PC-3 (cell line): ENCODE measurements at regions of chr16 and their contacts with region 1.

Region 1: DNA sequence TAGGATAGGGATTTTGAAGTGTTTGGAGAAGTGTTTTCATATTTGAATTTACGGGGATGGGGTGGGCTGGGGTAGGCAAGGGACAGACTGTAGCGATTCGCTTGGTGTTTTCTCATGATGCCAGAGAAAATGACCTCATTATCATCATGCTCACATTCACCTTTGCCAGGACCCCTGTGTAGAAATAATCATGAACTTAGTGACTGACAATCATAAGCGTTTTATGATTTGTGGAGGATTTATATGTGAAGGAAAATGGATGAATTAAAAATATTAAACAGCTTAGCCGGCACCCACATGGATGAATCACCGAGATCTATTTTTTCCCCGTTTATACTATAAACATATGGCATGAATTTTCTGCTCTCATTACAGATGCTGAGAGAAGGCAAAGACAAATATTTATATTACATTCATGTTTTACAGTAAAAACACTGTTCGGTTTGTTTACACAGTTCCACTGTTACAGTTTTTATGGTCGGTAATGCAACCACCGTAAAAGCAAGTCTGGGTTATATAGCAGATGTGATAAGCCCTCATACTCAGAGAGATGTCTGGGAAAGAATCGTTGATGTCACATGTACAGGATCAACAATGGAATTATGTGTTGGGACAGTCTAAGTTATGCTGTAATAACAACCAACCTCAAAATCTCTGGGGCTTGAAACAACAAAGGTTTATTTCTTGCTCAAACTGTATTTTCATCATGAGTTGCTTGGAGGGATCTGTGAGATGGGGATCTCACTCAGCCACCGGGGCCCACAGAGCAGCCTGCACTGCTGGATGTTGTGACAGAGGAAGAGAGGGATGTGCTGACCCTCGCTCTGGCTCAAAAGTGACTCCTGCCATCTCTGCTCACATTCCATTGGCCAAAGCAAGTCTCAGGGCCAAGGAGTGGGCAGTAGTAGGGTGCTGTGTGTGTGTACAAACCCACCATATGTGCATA is 85.1 kb downstream of the WWOX start:
- DNase-seq: peak; percentile 73
- ATAC-seq: peak; percentile 91
- H3K4me3 ChIP-seq: peak overlapping the region; percentile 58
- H3K27ac ChIP-seq: peak overlapping the region; percentile 34
- H3K4me1 ChIP-seq: peaks cover 19% of the 10 kb centered on the region
- H3K27me3 ChIP-seq: no peaks in the 10 kb centered on the region
- CTCF ChIP-seq: no peak

Region 2: DNA sequence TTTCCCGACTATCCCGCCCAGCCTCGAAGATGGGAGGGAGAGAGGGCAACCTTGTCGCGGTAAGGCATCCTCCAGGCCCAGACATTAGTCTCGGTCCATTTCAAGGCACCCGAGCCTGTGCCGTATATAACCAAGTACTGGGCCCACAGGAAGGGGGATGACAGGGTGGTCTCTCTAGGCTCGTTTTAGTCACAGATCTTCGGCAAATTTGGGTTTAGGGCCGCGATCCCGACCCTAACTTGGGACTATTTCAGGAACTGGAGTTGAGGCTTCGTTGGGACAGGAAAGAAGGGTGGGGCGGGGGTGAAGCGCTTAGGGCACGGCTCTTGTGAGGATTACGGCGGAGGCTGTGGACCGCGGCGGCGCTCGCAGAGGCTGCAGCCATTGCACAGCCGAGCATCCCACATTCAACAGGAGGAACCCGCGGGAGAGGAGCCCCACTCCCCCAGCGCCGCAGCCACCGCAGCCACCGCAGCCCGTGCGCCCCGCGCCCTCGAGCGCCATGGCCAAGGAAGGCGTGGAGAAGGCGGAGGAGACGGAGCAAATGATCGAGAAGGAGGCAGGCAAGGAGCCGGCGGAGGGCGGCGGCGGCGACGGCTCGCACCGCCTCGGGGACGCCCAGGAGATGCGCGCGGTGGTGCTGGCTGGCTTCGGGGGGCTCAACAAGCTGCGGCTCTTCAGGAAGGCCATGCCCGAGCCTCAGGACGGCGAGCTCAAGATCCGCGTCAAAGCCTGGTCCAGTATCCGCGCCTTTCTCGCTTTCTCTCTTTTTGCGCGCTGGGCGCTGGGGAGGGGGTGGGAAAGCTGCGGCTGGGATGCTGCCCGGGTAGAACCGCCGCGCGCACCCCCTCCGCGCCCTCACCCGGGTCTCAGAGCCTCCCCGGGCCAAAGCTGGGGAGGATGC is 396.1 kb before region 1 on chr16 and contains the start of gene VAT1L:
- CTCF ChIA-PET with region 1: no interaction called
- POLR2A ChIA-PET with region 1: no interaction called
- intact Hi-C with region 1: no loop called
- DNase-seq: no peak
- ATAC-seq: no peak
- H3K4me3 ChIP-seq: no peak within 1 kb of the TSS
- H3K27ac ChIP-seq: no peak within 1 kb of the TSS
- H3K4me1 ChIP-seq: no peaks in the 10 kb centered on the region
- H3K27me3 ChIP-seq: peaks cover 18% of the 10 kb centered on the region; the same call in 1 of the 2 replicates
- CTCF ChIP-seq: no peak
- total RNA-seq, gene VAT1L: 0.29 and 0.47 TPM in 2 replicates

Region 3: DNA sequence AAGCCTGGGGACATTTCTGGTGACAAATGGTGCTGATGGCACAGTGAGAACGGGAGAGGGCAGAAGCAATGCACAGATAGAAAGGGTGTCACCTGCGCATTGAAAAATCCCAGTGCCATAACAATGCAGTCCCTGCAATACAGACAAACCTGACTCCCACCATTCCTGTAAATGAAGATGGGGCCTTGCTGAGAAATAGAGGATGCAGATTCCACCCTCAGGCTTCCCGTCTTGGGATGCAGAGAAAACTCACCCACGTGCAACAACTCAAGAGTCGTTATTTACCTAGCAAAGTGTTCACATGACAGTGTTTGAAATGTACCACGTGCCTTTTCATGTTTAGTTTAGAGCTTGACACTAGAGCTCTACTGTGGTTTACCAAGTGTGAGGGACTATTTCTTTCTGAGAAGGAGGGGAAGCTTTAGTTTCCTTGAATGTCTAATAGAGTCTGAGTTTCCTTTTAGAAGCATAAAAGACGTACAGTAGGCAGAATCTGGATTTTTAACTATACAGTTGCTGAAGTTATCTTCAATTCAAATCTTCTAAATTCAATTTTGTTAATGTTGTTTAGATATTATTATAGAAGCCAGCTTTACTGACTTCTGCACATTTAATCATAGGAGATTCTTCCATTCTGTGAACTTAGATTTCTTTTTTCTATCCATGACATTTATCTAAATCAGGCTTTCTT is 49.4 kb before region 1 on chr16:
- CTCF ChIA-PET with region 1: no interaction called
- POLR2A ChIA-PET with region 1: interaction called, 3 read pairs
- intact Hi-C with region 1: loop called (anchors 1 kb)
- DNase-seq: no peak
- ATAC-seq: no peak
- H3K4me3 ChIP-seq: no peak overlapping the region
- H3K27ac ChIP-seq: no peak overlapping the region
- H3K4me1 ChIP-seq: peaks cover 11% of the 10 kb centered on the region
- H3K27me3 ChIP-seq: no peaks in the 10 kb centered on the region
- CTCF ChIP-seq: no peak

Region 4: DNA sequence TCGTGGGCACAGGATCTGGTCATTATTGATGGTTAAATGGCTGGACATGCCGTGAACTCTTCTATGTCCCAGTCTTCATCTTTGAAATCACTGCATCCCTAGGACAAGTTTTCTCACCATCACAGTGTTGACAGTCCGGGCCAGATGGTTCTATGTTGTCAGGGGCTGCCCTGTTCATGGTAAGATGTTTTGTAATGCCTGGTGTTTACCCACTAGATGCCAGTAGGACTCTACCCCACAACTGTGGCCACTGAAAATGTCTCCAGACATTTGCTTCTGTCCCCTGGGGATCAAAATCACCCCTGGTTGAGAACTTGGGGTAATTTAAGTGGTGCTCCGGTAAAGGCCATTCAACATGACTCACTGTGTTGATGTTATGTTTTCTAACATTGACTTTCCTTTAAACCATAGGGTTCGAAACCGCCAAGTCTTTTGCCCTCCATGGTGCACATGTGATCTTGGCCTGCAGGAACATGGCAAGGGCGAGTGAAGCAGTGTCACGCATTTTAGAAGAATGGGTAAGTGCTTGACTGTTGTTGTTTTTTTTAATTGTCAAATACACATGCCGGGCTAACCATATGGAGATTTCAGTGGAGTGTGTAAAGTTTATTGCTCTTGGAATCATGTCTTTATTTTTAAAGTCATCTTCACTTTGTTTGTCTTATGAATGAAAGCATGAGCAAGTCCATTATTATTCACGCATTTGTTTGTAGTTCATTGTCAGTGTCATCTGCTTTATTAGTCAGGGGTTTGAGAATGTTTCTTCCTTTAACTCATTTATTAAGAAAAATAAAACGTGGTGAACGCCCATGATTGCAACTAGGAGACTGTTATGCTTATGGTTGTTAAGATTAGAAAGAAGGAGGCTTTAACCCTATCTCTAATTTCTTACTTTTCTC is 20.5 kb before region 1 on chr16:
- CTCF ChIA-PET with region 1: no interaction called
- POLR2A ChIA-PET with region 1: no interaction called
- intact Hi-C with region 1: no loop called
- DNase-seq: no peak
- ATAC-seq: no peak
- H3K4me3 ChIP-seq: no peak overlapping the region
- H3K27ac ChIP-seq: no peak overlapping the region
- H3K4me1 ChIP-seq: no peaks in the 10 kb centered on the region
- H3K27me3 ChIP-seq: no peaks in the 10 kb centered on the region
- CTCF ChIP-seq: no peak

Region 5: GRCh38 chr16:78209951-78210661 is 25.6 kb after region 1 on chr16:
- CTCF ChIA-PET with region 1: no interaction called
- POLR2A ChIA-PET with region 1: no interaction called
- intact Hi-C with region 1: loop called (anchors 1 kb)
- DNase-seq: peak; percentile 90
- ATAC-seq: peak; percentile 83
- H3K4me3 ChIP-seq: peak overlapping the region; percentile 42; the same call in 1 of the 2 replicates
- H3K27ac ChIP-seq: peak overlapping the region; percentile 74
- H3K4me1 ChIP-seq: peaks cover 36% of the 10 kb centered on the region
- H3K27me3 ChIP-seq: no peaks in the 10 kb centered on the region
- CTCF ChIP-seq: no peak

Region 6: GRCh38 chr16:78220571-78220970 is 36.1 kb after region 1 on chr16:
- CTCF ChIA-PET with region 1: no interaction called
- POLR2A ChIA-PET with region 1: no interaction called
- intact Hi-C with region 1: no loop called
- DNase-seq: no peak
- ATAC-seq: no peak
- H3K4me3 ChIP-seq: no peak overlapping the region
- H3K27ac ChIP-seq: no peak overlapping the region
- H3K4me1 ChIP-seq: no peaks in the 10 kb centered on the region
- H3K27me3 ChIP-seq: no peaks in the 10 kb centered on the region
- CTCF ChIP-seq: no peak

Region 7: DNA sequence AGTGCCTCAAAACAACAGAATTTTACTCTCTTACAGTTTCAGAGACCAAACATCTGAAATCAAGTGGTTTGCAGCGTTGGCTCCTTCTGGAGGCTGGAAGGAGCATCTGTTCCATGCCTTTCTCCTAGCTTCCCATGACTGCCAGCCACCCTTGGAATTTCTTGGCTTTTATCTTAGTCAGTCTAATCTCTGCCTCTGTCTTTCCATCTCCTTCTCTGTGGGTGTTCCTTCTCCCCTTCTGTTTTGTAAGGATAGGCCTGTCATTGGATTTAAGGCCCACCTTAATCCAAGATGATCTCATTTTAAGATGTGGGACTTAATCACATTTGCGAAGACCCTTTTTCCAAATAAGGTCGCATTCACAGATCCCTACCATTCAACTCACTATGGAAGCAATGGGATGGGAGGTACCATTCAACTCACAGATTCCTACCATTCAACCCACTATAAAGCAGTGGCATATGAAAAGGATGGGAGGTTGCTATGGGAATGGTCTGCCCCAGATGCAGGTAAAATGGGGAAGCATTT is 236.7 kb after region 1 on chr16:
- CTCF ChIA-PET with region 1: no interaction called
- POLR2A ChIA-PET with region 1: no interaction called
- intact Hi-C with region 1: no loop called
- DNase-seq: no peak
- ATAC-seq: no peak
- H3K4me3 ChIP-seq: no peak overlapping the region
- H3K27ac ChIP-seq: no peak overlapping the region
- H3K4me1 ChIP-seq: no peaks in the 10 kb centered on the region
- H3K27me3 ChIP-seq: no peaks in the 10 kb centered on the region
- CTCF ChIP-seq: no peak